Activated T-helper 1 cell treated with anti-CD3 and anti-CD28 coated beads, Interleukin-12 subunit alpha, Interleukin-12 subunit beta, Interleukin-2, Interleukin-4 antibody, amounts not matched to agents 30 ng/mL and 10 ng/mL and 1 ng/mL, durations not matched to agents 14 hours and 24 hours and 36 hours (primary cell): ENCODE measurements at regions of chr18 and their contacts with region 1.

Region 1: DNA sequence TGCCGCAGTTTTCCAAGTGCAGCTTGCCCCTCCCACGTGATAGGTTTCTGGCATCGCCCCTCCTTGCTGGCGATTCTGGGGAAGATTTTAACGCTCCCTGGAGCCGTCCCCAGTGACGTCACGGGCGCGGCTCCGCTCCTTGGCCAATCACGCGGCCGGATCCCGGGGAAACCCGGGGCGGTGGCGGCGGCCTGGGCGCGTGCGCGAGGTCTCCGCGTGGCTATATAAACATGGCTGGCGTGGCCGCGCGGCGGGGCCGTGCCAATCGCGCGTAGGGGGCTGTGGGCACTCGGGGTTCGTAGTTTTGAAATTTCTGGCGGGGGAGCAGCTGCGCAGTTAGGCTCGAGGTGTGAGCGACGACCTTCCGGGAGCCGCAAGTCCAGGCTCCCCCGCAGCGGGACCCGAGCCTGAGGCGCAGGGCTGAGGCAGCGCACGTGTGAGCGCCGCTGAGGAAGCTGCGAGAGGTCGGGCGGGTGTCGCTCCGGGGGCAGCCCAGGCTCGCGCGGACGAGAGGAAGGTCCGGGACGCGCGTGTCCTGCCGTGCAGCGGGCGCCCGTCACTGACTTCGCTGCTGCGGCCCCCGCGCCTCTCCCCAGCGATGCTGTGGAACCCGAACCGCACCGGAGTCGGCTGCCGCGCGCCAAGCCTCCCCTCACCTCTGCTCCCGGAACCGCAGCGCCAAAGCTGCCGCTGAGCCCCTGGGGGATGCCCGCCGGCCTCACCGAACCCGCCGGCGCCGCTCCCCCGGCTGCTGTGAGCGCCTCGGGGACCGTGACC is at the start of gene TAF4B:
- DNase-seq: peak; percentile 93
- H3K4me3 Mint-ChIP-seq: peak within 1 kb of the TSS; percentile 94
- H3K27ac Mint-ChIP-seq: peak within 1 kb of the TSS; percentile 93
- H3K4me1 Mint-ChIP-seq: peaks cover 42% of the 10 kb centered on the region
- H3K27me3 Mint-ChIP-seq: peaks cover 3% of the 10 kb centered on the region
- total RNA-seq, gene TAF4B: 16.1 and 17.0 TPM in 2 replicates

Region 2: GRCh38 chr18:25921677-25922421 is 304.6 kb before region 1 on chr18:
- intact Hi-C with region 1: loop called (anchors 2 kb)
- DNase-seq: peak; percentile 23
- H3K4me3 Mint-ChIP-seq: no peak overlapping the region
- H3K27ac Mint-ChIP-seq: no peak overlapping the region
- H3K4me1 Mint-ChIP-seq: peaks cover 7% of the 10 kb centered on the region
- H3K27me3 Mint-ChIP-seq: peaks cover 8% of the 10 kb centered on the region

Region 3: GRCh38 chr18:25962176-25962575 is 264.2 kb before region 1 on chr18:
- intact Hi-C with region 1: no loop called
- DNase-seq: no peak
- H3K4me3 Mint-ChIP-seq: no peak overlapping the region
- H3K27ac Mint-ChIP-seq: no peak overlapping the region
- H3K4me1 Mint-ChIP-seq: no peaks in the 10 kb centered on the region
- H3K27me3 Mint-ChIP-seq: peaks cover 11% of the 10 kb centered on the region

Region 4: GRCh38 chr18:26190506-26190905 is 35.9 kb before region 1 on chr18:
- intact Hi-C with region 1: loop called (anchors 1 kb)
- DNase-seq: peak; percentile 22
- H3K4me3 Mint-ChIP-seq: peak overlapping the region; percentile 60
- H3K27ac Mint-ChIP-seq: peak overlapping the region; percentile 67
- H3K4me1 Mint-ChIP-seq: peaks cover 7% of the 10 kb centered on the region
- H3K27me3 Mint-ChIP-seq: no peaks in the 10 kb centered on the region

Region 5: GRCh38 chr18:26215247-26215970 is 11.0 kb before region 1 on chr18:
- intact Hi-C with region 1: loop called (anchors 1 kb)
- DNase-seq: peak; percentile 30
- H3K4me3 Mint-ChIP-seq: peak overlapping the region; percentile 67
- H3K27ac Mint-ChIP-seq: peak overlapping the region; percentile 80
- H3K4me1 Mint-ChIP-seq: peaks cover 25% of the 10 kb centered on the region
- H3K27me3 Mint-ChIP-seq: peaks cover 4% of the 10 kb centered on the region